ENCODE measurements at regions of chr3 and their contacts with region 1.

Region 1: GRCh38 chr3:186108941-186109865 is at the start of gene ETV5:
- DNase-seq: peak; percentile 100
- H3K4me3 ChIP-seq: peak within 1 kb of the TSS; percentile 73 to 95
- H3K27ac ChIP-seq: peak within 1 kb of the TSS; percentile 91 to 95
- H3K4me1 ChIP-seq: peaks cover 0 to 20% of the 10 kb centered on the region in 2 donors
- H3K27me3 ChIP-seq: no peaks in the 10 kb centered on the region
- CTCF ChIP-seq: peak in 1 of 3 experiments; percentile 29
- total RNA-seq, gene ETV5: 15.8 TPM

Region 2: GRCh38 chr3:185659942-185660921 is 449.0 kb before region 1 on chr3:
- intact Hi-C with region 1: loop called (anchors 2 kb)
- DNase-seq: peak in 1 of 2 donors; percentile 85
- H3K4me3 ChIP-seq: peak overlapping the region in 1 of 2 donors; percentile 24
- H3K27ac ChIP-seq: peak overlapping the region in 1 of 2 donors; percentile 14
- H3K4me1 ChIP-seq: peaks cover 4 to 47% of the 10 kb centered on the region in 2 donors
- H3K27me3 ChIP-seq: no peaks in the 10 kb centered on the region
- CTCF ChIP-seq: peak; percentile 82 to 97 (median 96)

Region 3: DNA sequence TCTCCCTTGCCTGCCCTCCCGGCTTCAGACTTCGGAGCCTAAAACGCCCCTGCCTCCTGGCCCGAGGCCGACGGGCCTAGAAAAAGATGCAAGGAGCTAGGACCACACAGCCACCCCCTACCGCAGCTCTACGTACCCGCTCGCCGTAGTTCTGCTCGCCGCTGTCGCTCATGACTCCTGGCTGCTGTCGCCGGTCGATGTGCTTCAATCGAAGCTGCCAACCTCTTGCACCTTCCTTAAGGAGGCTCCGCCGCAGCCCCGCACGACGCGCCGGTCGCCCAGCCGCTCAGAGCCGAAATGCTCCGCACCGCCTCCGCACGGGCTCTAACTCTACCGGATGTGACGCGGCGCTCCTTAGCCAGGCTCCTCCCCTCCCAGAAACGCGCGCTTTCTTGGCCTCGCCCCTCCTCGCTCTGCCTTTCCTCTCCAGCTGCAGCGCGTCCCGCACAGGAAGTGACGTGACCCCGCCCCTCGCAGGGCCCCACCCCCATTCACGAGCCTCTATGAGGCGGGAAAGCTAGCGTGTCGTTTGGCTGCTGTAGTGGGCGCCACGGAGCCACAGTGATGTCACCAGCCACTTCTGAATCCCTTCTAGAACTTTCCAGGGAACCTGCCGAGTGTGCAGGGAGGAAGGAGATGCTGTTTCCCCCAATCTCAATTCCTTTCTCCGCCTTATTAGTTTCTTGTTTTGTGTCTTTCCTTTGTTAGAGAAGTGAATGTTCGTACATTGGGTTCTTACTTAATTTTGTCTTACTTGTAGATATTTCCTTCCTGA is 171.3 kb before region 1 on chr3 and contains the start of gene TRA2B:
- intact Hi-C with region 1: loop called (anchors 1 kb)
- DNase-seq: peak; percentile 97 to 99
- H3K4me3 ChIP-seq: peak within 1 kb of the TSS; percentile 99
- H3K27ac ChIP-seq: peak within 1 kb of the TSS; percentile 100
- H3K4me1 ChIP-seq: peaks cover 3 to 8% of the 10 kb centered on the region in 2 donors
- H3K27me3 ChIP-seq: no peaks in the 10 kb centered on the region
- CTCF ChIP-seq: peak in 2 of 3 experiments; percentile 39 to 40
- total RNA-seq, gene TRA2B: 138 TPM

Region 4: GRCh38 chr3:185983495-185984141 is 125.6 kb before region 1 on chr3:
- intact Hi-C with region 1: loop called (anchors 2 kb)
- DNase-seq: peak in 1 of 2 donors; percentile 85
- H3K4me3 ChIP-seq: peak overlapping the region in 1 of 2 donors; percentile 33
- H3K27ac ChIP-seq: no peak overlapping the region
- H3K4me1 ChIP-seq: peaks cover 4 to 38% of the 10 kb centered on the region in 2 donors
- H3K27me3 ChIP-seq: no peaks in the 10 kb centered on the region
- CTCF ChIP-seq: peak; percentile 82 to 92 (median 90)

Region 5: DNA sequence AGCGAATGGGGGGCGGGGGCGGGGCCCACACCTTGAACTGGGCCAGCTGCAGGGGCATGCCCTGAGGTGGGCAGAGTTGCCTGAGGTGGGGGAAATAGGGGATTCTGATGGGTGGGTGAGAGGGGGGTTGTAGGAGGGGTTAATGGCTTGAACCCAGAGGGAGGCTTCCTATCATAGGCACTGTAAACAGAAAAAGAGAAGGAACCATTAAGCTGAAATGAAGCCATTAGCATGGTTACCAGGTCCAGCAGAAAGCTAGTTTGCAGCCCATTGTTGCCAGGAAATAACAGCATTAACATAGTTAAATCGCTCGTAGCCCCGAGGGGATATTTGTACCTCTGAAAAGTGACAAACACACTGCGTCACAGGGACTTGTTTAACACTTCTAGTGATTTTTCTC is 29.3 kb before region 1 on chr3:
- intact Hi-C with region 1: loop called (anchors 1 kb)
- DNase-seq: no peak
- H3K4me3 ChIP-seq: peak overlapping the region in 1 of 2 donors; percentile 10
- H3K27ac ChIP-seq: peak overlapping the region; percentile 49 to 68
- H3K4me1 ChIP-seq: peaks cover 8 to 13% of the 10 kb centered on the region in 2 donors
- H3K27me3 ChIP-seq: no peaks in the 10 kb centered on the region
- CTCF ChIP-seq: no peak

Region 6: GRCh38 chr3:186406669-186407635 is 297.7 kb after region 1 on chr3:
- intact Hi-C with region 1: loop called (anchors 5 kb)
- DNase-seq: peak; percentile 23 to 91
- H3K4me3 ChIP-seq: no peak overlapping the region
- H3K27ac ChIP-seq: peak overlapping the region; percentile 90
- H3K4me1 ChIP-seq: peaks cover 5 to 12% of the 10 kb centered on the region in 2 donors
- H3K27me3 ChIP-seq: no peaks in the 10 kb centered on the region
- CTCF ChIP-seq: no peak

Region 7: DNA sequence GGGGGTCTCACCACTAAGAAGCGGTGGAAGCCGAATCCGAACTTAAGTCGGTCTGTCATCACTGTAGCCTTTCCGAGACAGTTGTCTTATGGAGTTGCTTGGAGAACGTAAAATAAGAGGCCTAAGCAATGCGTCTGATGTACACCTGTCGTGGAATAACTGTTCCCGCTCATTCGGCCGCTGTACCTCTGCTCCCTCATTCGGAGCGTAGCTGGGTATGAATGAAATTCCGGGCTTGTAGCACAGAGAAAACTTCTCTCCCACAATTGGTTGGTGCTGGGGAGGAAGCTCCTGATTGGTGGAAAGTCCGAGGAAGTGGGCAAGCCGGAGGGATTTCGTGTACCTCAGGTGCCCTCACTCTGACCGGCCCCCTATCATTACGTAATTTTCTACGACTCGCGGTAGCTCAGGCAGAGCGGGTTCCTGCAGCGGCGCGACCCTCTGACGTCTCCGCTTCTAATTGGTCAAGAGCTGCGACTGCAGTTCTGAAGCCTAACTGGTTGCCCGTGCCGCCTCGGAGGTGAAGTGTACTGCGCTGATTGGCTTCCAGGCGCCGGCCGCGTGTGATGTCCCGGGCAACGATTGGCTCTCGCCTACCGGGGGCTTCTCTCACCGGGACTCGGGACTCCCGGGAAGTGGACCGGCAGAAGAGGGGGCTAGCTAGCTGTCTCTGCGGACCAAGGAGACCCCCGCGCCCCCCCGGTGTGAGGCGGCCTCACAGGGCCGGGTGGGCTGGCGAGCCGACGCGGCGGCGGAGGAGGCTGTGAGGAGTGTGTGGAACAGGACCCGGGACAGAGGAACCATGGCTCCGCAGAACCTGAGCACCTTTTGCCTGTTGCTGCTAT is 461.1 kb after region 1 on chr3 and contains the start of gene DNAJB11:
- intact Hi-C with region 1: loop called (anchors 5 kb)
- DNase-seq: peak; percentile 97 to 100
- H3K4me3 ChIP-seq: peak within 1 kb of the TSS; percentile 98 to 99
- H3K27ac ChIP-seq: peak within 1 kb of the TSS; percentile 93 to 97
- H3K4me1 ChIP-seq: peaks cover 0 to 21% of the 10 kb centered on the region in 2 donors
- H3K27me3 ChIP-seq: no peaks in the 10 kb centered on the region
- CTCF ChIP-seq: no peak
- total RNA-seq, gene DNAJB11: 31.3 TPM

Measured in ascending aorta (tissue), 2 donors.